ENCODE measurements at regions of chr20 and their contacts with region 1.

Region 1: GRCh38 chr20:62539198-62540045 is 63.6 kb upstream of the GATA5 start:
- DNase-seq: no peak
- H3K4me3 ChIP-seq: no peak overlapping the region
- H3K27ac ChIP-seq: no peak overlapping the region
- H3K4me1 ChIP-seq: no peaks in the 10 kb centered on the region
- H3K27me3 ChIP-seq: peaks cover 92% of the 10 kb centered on the region
- CTCF ChIP-seq: no peak

Region 2: DNA sequence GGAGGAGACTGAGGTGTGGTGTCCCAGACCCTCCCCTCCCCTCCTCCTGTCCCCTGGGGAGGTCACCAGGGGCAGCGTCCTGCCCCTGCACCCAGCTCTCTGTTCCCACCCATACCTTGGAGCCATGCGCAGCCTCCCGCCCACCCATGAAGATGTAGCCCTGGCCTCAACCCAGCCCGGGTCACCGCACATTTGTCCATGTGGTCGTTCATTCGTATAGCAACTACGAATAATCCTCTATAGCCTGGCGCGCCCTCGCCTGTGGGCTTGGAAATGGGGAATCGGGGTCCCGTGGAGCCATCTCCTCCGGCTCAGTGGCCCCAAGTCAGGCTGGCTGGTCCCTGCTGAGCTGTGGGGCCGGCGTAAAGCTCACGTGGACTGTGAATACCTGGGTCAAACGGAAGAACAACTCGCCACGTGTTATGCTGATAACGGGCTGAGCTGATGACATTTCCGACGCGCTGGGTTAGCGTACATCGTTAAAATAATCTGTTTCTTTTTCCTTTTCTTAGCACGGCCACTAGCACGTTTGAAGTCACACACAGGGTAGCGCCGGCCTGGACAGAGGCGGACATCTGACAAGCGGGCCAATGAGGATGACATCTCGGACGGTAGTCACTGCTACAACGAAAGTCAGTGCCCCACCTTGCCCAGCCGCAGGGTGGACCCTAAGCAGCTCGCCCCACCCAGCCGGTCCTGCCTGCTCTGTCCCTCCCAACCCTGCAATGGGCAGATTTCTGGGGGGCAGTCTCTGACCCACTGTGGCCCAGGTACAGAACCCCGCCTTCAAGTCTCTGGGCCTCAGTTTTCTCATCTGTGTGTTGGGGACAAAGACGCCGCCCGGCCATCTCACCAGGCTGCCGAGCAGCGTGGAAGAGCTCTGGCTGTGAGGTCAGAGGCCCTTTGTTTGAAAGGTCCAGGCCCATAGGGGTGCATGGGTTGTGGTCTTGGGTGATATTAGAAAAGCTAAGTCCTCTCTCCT is 92.2 kb before region 1 on chr20:
- CTCF ChIA-PET with region 1: interaction called, 13 read pairs
- POLR2A ChIA-PET with region 1: interaction called, 4 read pairs
- intact Hi-C with region 1: no loop called
- DNase-seq: no peak
- H3K4me3 ChIP-seq: no peak overlapping the region
- H3K27ac ChIP-seq: no peak overlapping the region
- H3K4me1 ChIP-seq: no peaks in the 10 kb centered on the region
- H3K27me3 ChIP-seq: peaks cover 91% of the 10 kb centered on the region
- CTCF ChIP-seq: no peak

Region 3: GRCh38 chr20:62808211-62808865 is 268.9 kb after region 1 on chr20:
- CTCF ChIA-PET with region 1: no interaction called
- POLR2A ChIA-PET with region 1: no interaction called
- intact Hi-C with region 1: no loop called
- DNase-seq: peak in 1 of 2 experiments; percentile 68
- H3K4me3 ChIP-seq: no peak overlapping the region
- H3K27ac ChIP-seq: no peak overlapping the region
- H3K4me1 ChIP-seq: peaks cover 14% of the 10 kb centered on the region
- H3K27me3 ChIP-seq: no peaks in the 10 kb centered on the region
- CTCF ChIP-seq: peak; percentile 99

Measured in PC-9 (cell line).